ENCODE measurements at regions of chr3 and their contacts with region 1.

Region 1: DNA sequence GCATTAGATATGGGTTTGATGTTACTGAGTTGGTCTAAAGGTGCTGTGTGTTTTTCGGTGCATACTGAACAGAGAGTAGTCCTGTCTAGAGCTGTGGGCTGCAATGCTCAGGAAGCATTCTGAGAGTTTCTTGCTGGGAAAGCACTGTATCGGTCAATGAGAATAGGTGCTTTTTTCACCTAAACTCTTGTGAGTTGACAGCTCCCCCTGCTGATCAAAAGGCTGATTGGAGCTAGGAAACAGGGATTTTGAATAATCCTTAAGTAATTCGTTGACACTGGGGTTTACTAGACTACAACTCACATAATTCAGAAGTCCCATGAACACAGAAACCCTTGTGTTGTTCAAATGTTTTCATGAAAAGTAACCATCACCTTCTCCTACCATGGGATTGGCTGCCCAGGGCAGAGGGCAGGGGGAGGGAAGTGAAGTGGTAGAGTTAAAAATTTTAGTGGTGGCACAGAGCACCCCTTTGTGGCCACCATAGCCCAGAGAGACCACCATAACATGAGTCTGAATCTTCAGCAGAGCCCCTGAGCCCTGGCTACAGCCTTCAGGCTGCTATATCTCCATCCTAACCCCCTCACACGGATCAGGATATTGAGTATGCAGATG is 13.0 kb upstream of the MANF start:
- DNase-seq: peak; percentile 56 to 64
- ATAC-seq: no peak
- H3K4me3 ChIP-seq: no peak overlapping the region
- H3K27ac ChIP-seq: no peak overlapping the region
- H3K4me1 ChIP-seq: no peaks in the 10 kb centered on the region
- H3K27me3 ChIP-seq: no peaks in the 10 kb centered on the region

Region 2: GRCh38 chr3:50568947-50569749 is 802.9 kb before region 1 on chr3 and contains the start of gene HEMK1:
- intact Hi-C with region 1: loop called in 1 of 2 experiments (anchors 10 kb)
- DNase-seq: peak; percentile 99
- ATAC-seq: peak; percentile 95
- H3K4me3 ChIP-seq: peak within 1 kb of the TSS; percentile 56 to 62
- H3K27ac ChIP-seq: peak within 1 kb of the TSS in 1 of 2 donors; percentile 72
- H3K4me1 ChIP-seq: no peaks in the 10 kb centered on the region
- H3K27me3 ChIP-seq: no peaks in the 10 kb centered on the region
- total RNA-seq, gene HEMK1: 12.0 to 21.3 TPM

Region 3: DNA sequence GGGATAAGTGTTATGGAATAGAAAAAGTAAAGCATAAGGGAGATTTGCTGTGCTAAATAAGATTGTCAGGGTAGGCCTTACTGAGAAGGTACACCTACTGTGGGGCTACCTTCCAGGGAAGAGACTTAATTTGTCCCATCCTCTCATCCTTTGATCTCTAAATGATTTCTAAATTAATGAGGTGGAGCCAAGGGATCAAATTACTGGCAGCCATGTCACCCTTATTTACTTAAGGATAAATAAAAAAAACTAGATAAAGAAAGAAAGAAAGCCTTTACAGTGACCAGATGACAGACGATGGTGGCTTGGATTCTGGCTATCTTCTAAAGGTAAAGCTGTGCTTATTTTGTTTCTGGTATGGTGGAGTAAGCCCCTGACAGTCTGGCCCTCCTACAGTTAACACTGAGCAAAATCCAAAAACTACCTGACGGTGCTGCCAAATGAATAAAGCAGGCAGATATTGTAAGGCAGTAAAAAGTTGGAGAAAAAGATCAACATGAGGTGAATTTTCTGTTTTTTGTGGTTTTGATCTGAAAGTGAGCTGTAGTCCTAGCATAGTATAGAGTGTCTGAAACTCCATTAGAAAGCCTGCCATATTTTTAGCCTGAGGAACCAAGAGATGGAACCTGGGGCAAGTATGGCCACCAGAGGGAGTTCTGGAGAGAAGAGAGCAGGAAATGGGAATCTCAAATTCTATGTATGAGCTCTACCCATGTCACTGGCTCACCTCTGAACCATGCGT is 272.1 kb before region 1 on chr3:
- intact Hi-C with region 1: loop called (anchors 5 kb)
- DNase-seq: peak in 1 of 2 donors; percentile 52
- ATAC-seq: no peak
- H3K4me3 ChIP-seq: no peak overlapping the region
- H3K27ac ChIP-seq: no peak overlapping the region
- H3K4me1 ChIP-seq: no peaks in the 10 kb centered on the region
- H3K27me3 ChIP-seq: no peaks in the 10 kb centered on the region

Region 4: DNA sequence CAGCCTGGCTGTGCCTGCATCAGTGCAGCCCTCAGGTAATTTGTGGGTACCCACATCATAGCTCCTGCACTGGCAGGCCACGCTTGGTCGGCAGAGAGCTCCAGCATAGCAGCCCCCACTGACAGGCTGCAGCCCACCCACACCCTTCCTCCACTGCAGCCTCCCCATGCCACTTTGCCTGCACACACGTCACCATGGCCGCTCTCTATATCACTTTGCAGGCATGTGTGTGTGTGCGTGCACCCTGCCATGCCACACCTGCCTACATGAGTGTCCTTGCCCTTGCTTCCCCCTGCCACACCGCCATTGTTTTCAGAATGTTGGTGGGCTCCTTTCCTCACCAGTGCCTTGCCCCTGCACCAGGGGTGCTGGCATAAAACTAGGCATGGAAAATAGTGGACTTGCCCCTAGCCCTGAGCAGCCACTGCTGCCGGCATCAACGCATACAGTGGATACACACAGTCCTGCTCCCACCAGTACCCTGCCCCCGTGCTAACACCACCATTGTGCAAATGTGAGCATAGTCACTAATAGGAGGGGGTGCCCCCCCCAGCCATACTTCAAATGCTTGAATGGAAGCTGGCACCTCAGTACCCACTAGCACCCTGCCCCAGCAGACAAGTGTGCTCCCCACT is 265.7 kb before region 1 on chr3:
- intact Hi-C with region 1: loop called (anchors 5 kb)
- DNase-seq: no peak
- ATAC-seq: no peak
- H3K4me3 ChIP-seq: no peak overlapping the region
- H3K27ac ChIP-seq: no peak overlapping the region
- H3K4me1 ChIP-seq: no peaks in the 10 kb centered on the region
- H3K27me3 ChIP-seq: no peaks in the 10 kb centered on the region

Region 5: GRCh38 chr3:51353691-51354090 is 18.4 kb before region 1 on chr3:
- intact Hi-C with region 1: no loop called
- DNase-seq: no peak
- ATAC-seq: no peak
- H3K4me3 ChIP-seq: no peak overlapping the region
- H3K27ac ChIP-seq: no peak overlapping the region
- H3K4me1 ChIP-seq: no peaks in the 10 kb centered on the region
- H3K27me3 ChIP-seq: no peaks in the 10 kb centered on the region

Measured in aorta (tissue), 5 donors.